ENCODE measurements at regions of chr6 and their contacts with region 1.

Region 1: GRCh38 chr6:34887753-34888513 is at the start of gene TAF11:
- DNase-seq: peak; percentile 98
- ATAC-seq: peak; percentile 92
- total RNA-seq, gene TAF11: 16.7 TPM

Region 2: GRCh38 chr6:34671801-34672656 is 215.9 kb before region 1 on chr6:
- intact Hi-C with region 1: no loop called
- DNase-seq: no peak
- ATAC-seq: peak; percentile 73

Region 3: GRCh38 chr6:34926666-34927065 is 38.7 kb after region 1 on chr6:
- intact Hi-C with region 1: loop called (anchors 5 kb)
- DNase-seq: no peak
- ATAC-seq: no peak

Region 4: GRCh38 chr6:34964564-34964963 is 76.6 kb after region 1 on chr6:
- intact Hi-C with region 1: loop called (anchors 2 kb)
- DNase-seq: no peak
- ATAC-seq: peak; percentile 56

Region 5: GRCh38 chr6:35181933-35182612 is 294.1 kb after region 1 on chr6:
- intact Hi-C with region 1: no loop called
- DNase-seq: peak; percentile 86
- ATAC-seq: peak; percentile 43